CD4-positive, alpha-beta T cell (primary cell): ENCODE measurements at regions of chr7 and their contacts with region 1.

Region 1: GRCh38 chr7:87933945-87934698 is at the start of gene ADAM22:
- DNase-seq: peak; percentile 55 to 92 (median 75)
- ATAC-seq: peak; percentile 92
- H3K4me3 ChIP-seq: peak within 1 kb of the TSS; percentile 65
- H3K4me3 Mint-ChIP-seq: peak within 1 kb of the TSS; percentile 88
- H3K27ac ChIP-seq: no peak within 1 kb of the TSS
- H3K27ac Mint-ChIP-seq: no peak within 1 kb of the TSS
- H3K4me1 ChIP-seq: peaks cover 15% of the 10 kb centered on the region
- H3K4me1 Mint-ChIP-seq: peaks cover 3% of the 10 kb centered on the region
- H3K27me3 ChIP-seq: no peaks in the 10 kb centered on the region
- H3K27me3 Mint-ChIP-seq: peaks cover 8% of the 10 kb centered on the region
- CTCF ChIP-seq: no peak
- total RNA-seq, gene ADAM22: 0.60 to 0.64 TPM

Region 2: GRCh38 chr7:87628780-87629569 is 305.1 kb before region 1 on chr7:
- CTCF ChIA-PET with region 1: no interaction called
- POLR2A ChIA-PET with region 1: interaction called, 10 read pairs
- intact Hi-C with region 1: no loop called
- DNase-seq: peak in 11 of 14 experiments; percentile 1 to 50 (median 15)
- ATAC-seq: peak; percentile 28
- H3K4me3 ChIP-seq: peak overlapping the region; percentile 69
- H3K4me3 Mint-ChIP-seq: peak overlapping the region; percentile 87
- H3K27ac ChIP-seq: no peak overlapping the region
- H3K27ac Mint-ChIP-seq: peak overlapping the region; percentile 78
- H3K4me1 ChIP-seq: peaks cover 18% of the 10 kb centered on the region
- H3K4me1 Mint-ChIP-seq: peaks cover 18% of the 10 kb centered on the region
- H3K27me3 ChIP-seq: peaks cover 8 to 11% of the 10 kb centered on the region in 2 experiments
- H3K27me3 Mint-ChIP-seq: peaks cover 16% of the 10 kb centered on the region
- CTCF ChIP-seq: no peak

Region 3: GRCh38 chr7:88184848-88185304 is 250.8 kb after region 1 on chr7:
- CTCF ChIA-PET with region 1: no interaction called
- POLR2A ChIA-PET with region 1: no interaction called
- intact Hi-C with region 1: no loop called
- DNase-seq: peak in 1 of 14 experiments; percentile 16
- ATAC-seq: no peak
- H3K4me3 ChIP-seq: no peak overlapping the region
- H3K4me3 Mint-ChIP-seq: no peak overlapping the region
- H3K27ac ChIP-seq: no peak overlapping the region
- H3K27ac Mint-ChIP-seq: no peak overlapping the region
- H3K4me1 ChIP-seq: no peaks in the 10 kb centered on the region
- H3K4me1 Mint-ChIP-seq: no peaks in the 10 kb centered on the region
- H3K27me3 ChIP-seq: no peaks in the 10 kb centered on the region
- H3K27me3 Mint-ChIP-seq: no peaks in the 10 kb centered on the region
- CTCF ChIP-seq: no peak

Region 4: GRCh38 chr7:88219781-88220747 is 285.9 kb after region 1 on chr7 and contains the start of gene SRI:
- CTCF ChIA-PET with region 1: interaction called, 3 read pairs
- POLR2A ChIA-PET with region 1: interaction called, 3 read pairs
- intact Hi-C with region 1: loop called in 1 of 2 experiments (anchors 10 kb)
- DNase-seq: peak; percentile 83 to 96 (median 90)
- ATAC-seq: peak; percentile 97
- H3K4me3 ChIP-seq: peak within 1 kb of the TSS; percentile 74
- H3K4me3 Mint-ChIP-seq: peak within 1 kb of the TSS; percentile 99
- H3K27ac ChIP-seq: peak within 1 kb of the TSS; percentile 58 to 69
- H3K27ac Mint-ChIP-seq: peak within 1 kb of the TSS; percentile 81
- H3K4me1 ChIP-seq: peaks cover 24% of the 10 kb centered on the region
- H3K4me1 Mint-ChIP-seq: peaks cover 39% of the 10 kb centered on the region
- H3K27me3 ChIP-seq: no peaks in the 10 kb centered on the region
- H3K27me3 Mint-ChIP-seq: no peaks in the 10 kb centered on the region
- CTCF ChIP-seq: peak; percentile 96
- total RNA-seq, gene SRI: 44.3 to 45.7 TPM